ENCODE measurements at regions of chr10 and their contacts with region 1.

Region 1: DNA sequence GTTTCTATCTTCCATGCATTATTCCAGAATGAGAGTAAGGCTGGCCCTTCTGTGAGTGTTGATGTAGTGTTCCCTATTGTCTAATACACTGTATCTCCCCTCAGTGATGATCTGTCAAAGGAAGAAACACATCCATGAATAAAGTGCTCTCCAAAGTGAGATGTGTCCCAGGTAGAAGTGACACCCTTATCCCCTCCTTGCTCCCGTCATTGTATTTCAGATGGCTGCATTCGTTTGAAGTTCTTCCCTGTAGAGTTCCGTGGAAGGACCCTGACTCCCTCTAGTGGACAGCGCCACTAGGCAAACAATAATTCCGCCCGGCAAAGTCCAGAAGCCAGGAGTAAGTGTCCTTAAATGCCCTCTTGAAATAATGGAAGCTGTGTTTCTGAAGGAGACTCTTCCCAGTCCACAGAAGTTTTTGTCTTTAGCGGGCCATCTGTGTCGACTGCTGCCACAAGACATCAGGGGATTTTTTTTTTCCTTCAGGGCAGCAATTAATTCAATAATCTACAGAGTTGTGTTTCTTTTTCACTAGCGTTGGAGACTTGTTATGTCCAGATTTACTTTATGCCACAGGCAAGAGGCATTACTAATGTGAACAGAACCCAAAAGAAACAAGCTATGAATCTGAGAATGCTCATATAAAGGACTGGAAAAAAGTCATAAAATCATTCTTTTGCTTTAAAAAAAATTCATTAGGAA is 64.6 kb downstream of the THNSL1 start:
- DNase-seq: peak; percentile 66 to 92
- ATAC-seq: peak; percentile 93 to 97 (median 95)
- H3K4me3 ChIP-seq: no peak overlapping the region
- H3K27ac ChIP-seq: peak overlapping the region in 7 of 10 donors; percentile 3 to 81 (median 54)
- H3K4me1 ChIP-seq: peaks cover 0 to 28% (median 13%) of the 10 kb centered on the region in 9 donors
- H3K27me3 ChIP-seq: no peaks in the 10 kb centered on the region
- CTCF ChIP-seq: peak; percentile 73 to 97 (median 91)

Region 2: GRCh38 chr10:24617771-24618391 is 463.1 kb before region 1 on chr10:
- intact Hi-C with region 1: loop called in 3 of 10 experiments (anchors 5 to 10 kb)
- DNase-seq: peak; percentile 44 to 63
- ATAC-seq: peak in 7 of 8 donors; percentile 38 to 80 (median 71)
- H3K4me3 ChIP-seq: no peak overlapping the region
- H3K27ac ChIP-seq: no peak overlapping the region
- H3K4me1 ChIP-seq: peaks cover under 1 to 13% (median 10%) of the 10 kb centered on the region in 9 donors
- H3K27me3 ChIP-seq: no peaks in the 10 kb centered on the region
- CTCF ChIP-seq: peak; percentile 60 to 90 (median 83)

Region 3: DNA sequence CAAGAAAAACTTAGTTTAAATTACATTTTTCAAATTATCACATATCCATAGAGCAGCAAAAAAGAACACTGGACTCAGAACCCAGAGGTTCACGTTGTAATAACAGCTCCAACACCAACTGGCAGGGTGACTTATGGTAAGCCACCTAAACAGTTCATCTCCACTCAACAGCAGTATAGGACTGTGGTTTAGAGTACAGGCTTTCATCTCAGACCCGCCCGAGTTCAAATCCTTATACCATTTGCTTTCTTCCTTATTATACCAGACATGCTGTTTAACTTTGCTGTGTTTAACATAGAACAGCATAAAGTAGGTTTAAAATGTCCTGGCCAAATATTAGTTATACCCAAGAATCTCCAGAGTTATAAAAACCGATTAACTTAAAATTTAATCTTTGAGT is 455.3 kb before region 1 on chr10:
- intact Hi-C with region 1: loop called in 1 of 10 experiments (anchors 5 kb)
- DNase-seq: no peak
- ATAC-seq: no peak
- H3K4me3 ChIP-seq: no peak overlapping the region
- H3K27ac ChIP-seq: no peak overlapping the region
- H3K4me1 ChIP-seq: peaks cover 4 to 42% (median 26%) of the 10 kb centered on the region in 9 donors
- H3K27me3 ChIP-seq: no peaks in the 10 kb centered on the region
- CTCF ChIP-seq: no peak

Region 4: DNA sequence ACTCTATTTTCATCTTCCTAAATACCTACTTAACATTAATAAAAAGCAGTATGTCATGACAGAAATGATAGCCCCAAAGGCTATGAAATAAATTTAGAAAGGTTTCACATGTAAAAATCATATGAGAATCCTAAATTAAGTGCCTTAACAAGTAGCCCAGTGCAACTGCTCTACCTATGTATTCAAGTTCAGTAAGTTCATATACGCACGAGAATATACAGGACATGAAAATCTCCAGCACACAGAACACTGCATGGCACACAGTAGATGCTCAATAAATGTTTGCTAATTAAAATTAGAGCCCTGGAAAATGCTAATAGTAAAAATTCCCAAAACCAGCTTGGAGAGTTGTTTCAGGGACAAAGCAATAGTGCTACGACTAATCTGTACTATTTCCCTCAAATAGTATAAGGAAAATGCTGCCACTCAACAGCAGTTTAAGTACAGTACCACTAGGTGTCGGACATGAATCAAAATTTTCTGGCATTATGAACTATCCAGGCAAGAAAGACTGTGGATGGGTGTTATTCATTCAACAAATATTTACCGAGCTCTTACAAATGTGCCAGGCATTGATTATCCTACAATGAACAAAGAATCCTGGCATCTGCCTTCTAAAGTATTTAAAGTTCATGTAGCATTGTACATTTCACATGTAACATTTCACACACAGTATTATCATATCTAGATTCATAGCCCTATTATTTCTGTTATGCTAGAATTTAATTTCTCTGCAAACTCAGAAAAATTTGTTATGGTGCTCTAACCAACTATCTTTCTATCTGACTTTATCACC is 438.2 kb before region 1 on chr10:
- intact Hi-C with region 1: loop called in 7 of 10 experiments (anchors 5 to 10 kb)
- DNase-seq: peak in 1 of 2 donors; percentile 41
- ATAC-seq: peak; percentile 62 to 91 (median 88)
- H3K4me3 ChIP-seq: no peak overlapping the region
- H3K27ac ChIP-seq: no peak overlapping the region
- H3K4me1 ChIP-seq: peaks cover 0 to 48% (median 25%) of the 10 kb centered on the region in 9 donors
- H3K27me3 ChIP-seq: no peaks in the 10 kb centered on the region
- CTCF ChIP-seq: peak; percentile 57 to 88 (median 77)

Region 5: GRCh38 chr10:25016376-25017154 is 64.5 kb before region 1 on chr10 and contains the start of gene THNSL1:
- intact Hi-C with region 1: loop called in 2 of 10 experiments (anchors 5 to 10 kb)
- DNase-seq: peak; percentile 99
- ATAC-seq: peak; percentile 99 to 100 (median 99)
- H3K4me3 ChIP-seq: peak within 1 kb of the TSS; percentile 61 to 83 (median 70)
- H3K27ac ChIP-seq: peak within 1 kb of the TSS; percentile 75 to 95 (median 92)
- H3K4me1 ChIP-seq: peaks cover 0 to 18% (median 13%) of the 10 kb centered on the region in 9 donors
- H3K27me3 ChIP-seq: no peaks in the 10 kb centered on the region
- CTCF ChIP-seq: no peak
- total RNA-seq, gene THNSL1: 4.0 to 6.8 (median 5.1) TPM

Region 6: GRCh38 chr10:25026463-25026862 is 54.6 kb before region 1 on chr10:
- intact Hi-C with region 1: loop called in 7 of 10 experiments (anchors 2 to 10 kb)
- DNase-seq: no peak
- ATAC-seq: no peak
- H3K4me3 ChIP-seq: no peak overlapping the region
- H3K27ac ChIP-seq: no peak overlapping the region
- H3K4me1 ChIP-seq: peaks cover 0 to 33% (median 7%) of the 10 kb centered on the region in 9 donors
- H3K27me3 ChIP-seq: no peaks in the 10 kb centered on the region
- CTCF ChIP-seq: peak in 7 of 9 donors; percentile 36 to 61 (median 48)

Region 7: DNA sequence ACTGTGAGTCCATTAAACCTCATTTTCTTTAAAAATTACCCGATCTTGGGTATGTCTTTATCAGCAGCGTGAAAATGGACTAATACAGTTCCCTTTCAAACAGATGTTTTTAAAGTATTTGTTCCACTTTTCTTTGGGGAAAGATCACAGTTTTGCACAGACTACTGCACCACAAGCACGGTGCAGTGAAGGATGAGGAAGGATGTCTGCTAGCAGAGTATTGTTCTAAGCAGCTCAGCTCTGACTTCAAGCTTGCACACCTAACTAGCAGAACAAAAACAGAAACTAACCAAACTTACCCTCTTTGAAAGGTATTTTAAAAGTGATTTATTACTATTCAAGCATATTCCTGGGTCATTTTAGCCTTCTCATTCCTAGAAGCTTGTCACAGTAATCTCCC is 44.6 kb before region 1 on chr10:
- intact Hi-C with region 1: loop called in 1 of 10 experiments (anchors 10 kb)
- DNase-seq: no peak
- ATAC-seq: no peak
- H3K4me3 ChIP-seq: no peak overlapping the region
- H3K27ac ChIP-seq: no peak overlapping the region
- H3K4me1 ChIP-seq: peaks cover 0 to 15% (median 0%) of the 10 kb centered on the region in 9 donors
- H3K27me3 ChIP-seq: no peaks in the 10 kb centered on the region
- CTCF ChIP-seq: no peak

Region 8: GRCh38 chr10:25174461-25175230 is 93.6 kb after region 1 on chr10 and contains the start of gene GPR158:
- intact Hi-C with region 1: no loop called
- DNase-seq: peak; percentile 82 to 91
- ATAC-seq: peak; percentile 89 to 96 (median 93)
- H3K4me3 ChIP-seq: peak within 1 kb of the TSS; percentile 41 to 59 (median 49)
- H3K27ac ChIP-seq: no peak within 1 kb of the TSS
- H3K4me1 ChIP-seq: peaks cover 3 to 24% (median 18%) of the 10 kb centered on the region in 9 donors
- H3K27me3 ChIP-seq: peaks cover 7 to 90% (median 64%) of the 10 kb centered on the region in 7 donors
- CTCF ChIP-seq: no peak
- total RNA-seq, gene GPR158: 0.04 TPM in 1 of 10 donors, not detected in the others